GM12878 (cell line): ENCODE measurements at regions of chr1 and their contacts with region 1.

Region 1: GRCh38 chr1:156480411-156481192 is 20.0 kb downstream of the MEF2D start:
- DNase-seq: no peak
- ATAC-seq: peak; percentile 89
- H3K4me3 ChIP-seq: no peak overlapping the region
- H3K27ac ChIP-seq: peak overlapping the region; percentile 75
- H3K4me1 ChIP-seq: peaks cover 37% of the 10 kb centered on the region
- H3K27me3 ChIP-seq: no peaks in the 10 kb centered on the region
- CTCF ChIP-seq: peak; percentile 66 to 85 (median 69)
- EP300 ChIP-seq: no peak
- POLR2A ChIP-seq: no peak; the same call in 1 of the 2 replicates
- RAD21 ChIP-seq: peak; percentile 59

Region 2: DNA sequence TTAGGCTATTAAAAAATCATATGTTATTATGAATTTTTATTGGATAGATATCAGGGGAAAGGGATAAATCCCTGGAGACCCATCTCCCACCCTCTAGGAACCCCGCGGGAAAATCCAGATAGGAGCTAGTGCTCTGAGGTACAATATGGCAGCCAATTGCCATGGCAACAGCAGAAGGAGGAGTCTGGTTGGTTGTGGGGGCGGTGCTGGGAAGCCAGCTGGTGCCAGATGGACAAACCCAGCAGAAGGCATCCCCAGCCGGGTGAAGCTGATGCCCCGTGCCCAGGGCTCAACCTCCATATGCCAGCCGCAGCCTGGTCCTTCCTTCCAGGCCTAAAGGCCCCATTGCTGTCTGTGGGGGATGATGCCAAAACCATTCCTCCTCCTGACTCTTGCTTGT is 73.3 kb before region 1 on chr1:
- CTCF ChIA-PET with region 1: no interaction called
- POLR2A ChIA-PET with region 1: no interaction called
- RAD21 ChIA-PET with region 1: no interaction called
- SMC1A ChIA-PET with region 1: no interaction called
- in situ Hi-C with region 1: no loop called
- intact Hi-C with region 1: no loop called
- DNase-seq: no peak
- ATAC-seq: no peak
- H3K4me3 ChIP-seq: no peak overlapping the region
- H3K27ac ChIP-seq: no peak overlapping the region
- H3K4me1 ChIP-seq: no peaks in the 10 kb centered on the region
- H3K27me3 ChIP-seq: peaks cover 0 to 3% of the 10 kb centered on the region in 2 experiments; a peak in 1 of 4 replicates
- CTCF ChIP-seq: no peak
- EP300 ChIP-seq: no peak
- POLR2A ChIP-seq: no peak
- RAD21 ChIP-seq: no peak

Region 3: GRCh38 chr1:156465747-156466365 is 14.7 kb before region 1 on chr1:
- CTCF ChIA-PET with region 1: interaction called, 10 read pairs
- POLR2A ChIA-PET with region 1: interaction called, 3 read pairs
- RAD21 ChIA-PET with region 1: interaction called, 3 read pairs
- SMC1A ChIA-PET with region 1: interaction called, 4 read pairs
- in situ Hi-C with region 1: no loop called
- intact Hi-C with region 1: no loop called
- DNase-seq: no peak
- ATAC-seq: peak; percentile 40
- H3K4me3 ChIP-seq: no peak overlapping the region
- H3K27ac ChIP-seq: no peak overlapping the region
- H3K4me1 ChIP-seq: no peaks in the 10 kb centered on the region
- H3K27me3 ChIP-seq: no peaks in the 10 kb centered on the region
- CTCF ChIP-seq: peak; percentile 12 to 25 (median 19); a peak in 3 of 6 replicates
- EP300 ChIP-seq: no peak
- POLR2A ChIP-seq: no peak
- RAD21 ChIP-seq: peak; percentile 49

Region 4: GRCh38 chr1:156510709-156511108 is 30.1 kb after region 1 on chr1:
- CTCF ChIA-PET with region 1: interaction called, 24 read pairs
- POLR2A ChIA-PET with region 1: interaction called, 630 read pairs
- RAD21 ChIA-PET with region 1: interaction called, 323 read pairs
- SMC1A ChIA-PET with region 1: interaction called, 460 read pairs
- in situ Hi-C with region 1: no loop called
- intact Hi-C with region 1: no loop called
- DNase-seq: no peak
- ATAC-seq: no peak
- H3K4me3 ChIP-seq: no peak overlapping the region
- H3K27ac ChIP-seq: no peak overlapping the region
- H3K4me1 ChIP-seq: peaks cover 19% of the 10 kb centered on the region
- H3K27me3 ChIP-seq: no peaks in the 10 kb centered on the region
- CTCF ChIP-seq: no peak
- EP300 ChIP-seq: no peak
- POLR2A ChIP-seq: no peak
- RAD21 ChIP-seq: no peak

Region 5: GRCh38 chr1:156571949-156572662 is 91.5 kb after region 1 on chr1 and contains the start of gene IQGAP3:
- CTCF ChIA-PET with region 1: interaction called, 16 read pairs
- POLR2A ChIA-PET with region 1: no interaction called
- RAD21 ChIA-PET with region 1: no interaction called
- SMC1A ChIA-PET with region 1: interaction called, 9 read pairs
- in situ Hi-C with region 1: no loop called
- intact Hi-C with region 1: no loop called
- DNase-seq: peak; percentile 15
- ATAC-seq: peak; percentile 99
- H3K4me3 ChIP-seq: peak within 1 kb of the TSS; percentile 73
- H3K27ac ChIP-seq: no peak within 1 kb of the TSS
- H3K4me1 ChIP-seq: 0 out of 2 replicates have a peak, but pooled peaks cover 3% of the 10 kb centered on the region
- H3K27me3 ChIP-seq: no peaks in the 10 kb centered on the region; a peak in 1 of 4 replicates
- CTCF ChIP-seq: no peak
- EP300 ChIP-seq: no peak
- POLR2A ChIP-seq: no peak
- RAD21 ChIP-seq: no peak
- polyA plus RNA-seq, gene IQGAP3: 1.1 to 1.2 TPM

Region 6: GRCh38 chr1:156601122-156601830 is 120.7 kb after region 1 on chr1 and contains the start of gene GPATCH4:
- CTCF ChIA-PET with region 1: interaction called, 9 read pairs
- POLR2A ChIA-PET with region 1: interaction called, 3 read pairs
- RAD21 ChIA-PET with region 1: interaction called, 5 read pairs
- SMC1A ChIA-PET with region 1: interaction called, 4 read pairs
- in situ Hi-C with region 1: no loop called
- intact Hi-C with region 1: loop called (anchors 10 kb)
- DNase-seq: no peak
- ATAC-seq: peak; percentile 80
- H3K4me3 ChIP-seq: peak within 1 kb of the TSS; percentile 82
- H3K27ac ChIP-seq: peak within 1 kb of the TSS; percentile 93
- H3K4me1 ChIP-seq: peaks cover 9% of the 10 kb centered on the region
- H3K27me3 ChIP-seq: no peaks in the 10 kb centered on the region
- CTCF ChIP-seq: no peak
- EP300 ChIP-seq: 0 out of 4 replicates have a peak, but pooled peaks of 1 of the 2 experiments have one; percentile 13
- POLR2A ChIP-seq: peak; percentile 92
- RAD21 ChIP-seq: no peak
- polyA plus RNA-seq, gene GPATCH4: 82.5 to 90.4 TPM

Region 7: DNA sequence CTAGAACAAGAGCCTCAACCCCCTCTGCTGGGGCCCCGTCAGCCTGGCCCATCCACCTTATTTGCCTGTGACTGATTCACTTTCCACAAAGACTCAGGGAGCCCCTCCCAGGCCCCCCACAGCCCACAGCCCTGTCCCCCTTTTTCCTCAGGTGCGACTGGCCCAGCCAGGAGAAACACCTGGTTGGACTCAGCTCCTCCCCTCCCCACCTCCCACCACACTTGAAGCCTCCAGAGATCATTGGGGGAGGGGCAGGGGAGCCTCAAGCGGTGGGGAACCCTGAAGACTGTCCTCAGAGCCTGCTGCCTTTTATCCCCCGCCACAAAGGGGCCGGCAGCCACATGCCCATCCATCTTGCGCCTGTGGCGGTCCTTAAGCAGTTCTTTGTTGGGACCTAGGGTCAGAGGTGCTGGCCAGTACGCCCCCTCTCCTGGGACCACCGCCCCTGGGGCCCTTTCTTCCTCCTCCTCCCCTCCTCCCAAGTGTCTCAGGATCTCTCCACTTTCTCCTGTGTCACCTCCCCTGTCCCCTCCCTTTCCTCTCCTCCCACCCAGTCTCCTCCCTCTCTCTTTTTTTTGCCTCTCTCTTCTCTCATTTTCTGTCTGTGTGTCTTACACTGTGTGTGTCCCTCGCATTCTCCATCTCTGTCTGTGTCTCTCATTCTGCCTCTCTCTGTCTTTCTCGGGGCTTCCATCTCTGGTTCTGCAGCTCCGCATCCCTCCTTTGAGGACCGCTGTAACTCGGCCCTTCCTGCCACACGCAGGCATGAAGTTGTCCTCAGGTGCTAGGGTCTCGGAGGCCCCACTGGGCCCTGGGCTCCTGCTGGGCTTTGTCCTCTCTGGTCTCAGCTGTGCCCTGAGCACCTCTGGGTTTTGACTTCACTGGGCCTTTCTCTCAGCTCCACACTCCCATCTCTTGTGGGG is 212.6 kb after region 1 on chr1:
- CTCF ChIA-PET with region 1: no interaction called
- POLR2A ChIA-PET with region 1: no interaction called
- RAD21 ChIA-PET with region 1: no interaction called
- SMC1A ChIA-PET with region 1: no interaction called
- in situ Hi-C with region 1: no loop called
- intact Hi-C with region 1: no loop called
- DNase-seq: no peak
- ATAC-seq: no peak
- H3K4me3 ChIP-seq: no peak overlapping the region
- H3K27ac ChIP-seq: no peak overlapping the region
- H3K4me1 ChIP-seq: no peaks in the 10 kb centered on the region
- H3K27me3 ChIP-seq: peaks cover 18 to 33% of the 10 kb centered on the region in 2 experiments
- CTCF ChIP-seq: no peak
- EP300 ChIP-seq: no peak
- POLR2A ChIP-seq: no peak
- RAD21 ChIP-seq: no peak